ENCODE measurements at regions of chr14 and their contacts with region 1.

Region 1: DNA sequence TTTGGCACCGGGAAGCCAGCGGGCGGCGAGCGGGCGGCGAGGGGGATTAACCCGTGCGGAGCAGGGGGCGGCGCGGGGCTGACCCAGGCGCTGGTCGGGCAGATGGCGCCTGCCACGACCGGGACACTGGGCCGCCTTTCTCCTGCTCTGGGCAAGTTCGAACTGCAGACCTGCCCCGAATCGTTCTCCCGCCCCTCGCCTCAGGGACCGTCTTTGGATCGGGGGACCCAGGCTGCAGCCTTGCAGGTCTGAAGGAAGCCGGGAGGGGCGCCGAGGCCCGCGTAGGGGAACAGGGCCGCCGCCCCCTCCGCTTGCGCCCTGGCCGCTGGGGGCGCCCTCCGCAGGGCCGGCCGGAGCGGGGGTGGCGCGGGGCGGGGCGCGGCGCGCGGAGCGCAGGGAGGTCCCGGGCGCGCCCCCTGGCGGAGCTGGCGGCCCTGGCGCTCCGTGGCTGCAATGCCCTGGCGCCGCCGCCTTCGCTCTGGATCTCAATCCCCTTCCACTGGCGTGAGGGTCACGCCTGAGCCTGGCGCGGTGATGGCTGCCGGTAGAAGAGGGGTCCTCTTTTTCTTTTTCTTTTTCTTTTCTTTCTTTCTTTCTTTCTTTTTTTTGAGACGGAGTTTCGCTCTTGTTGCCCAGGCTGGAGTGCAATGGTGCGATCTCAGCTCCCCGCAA is 449 bp upstream of the LTBP2 start:
- DNase-seq: peak; percentile 70 to 92 (median 83)
- ATAC-seq: peak; percentile 85
- H3K4me3 ChIP-seq: peak overlapping the region; percentile 64 to 79
- H3K4me3 Mint-ChIP-seq: peak overlapping the region; percentile 79
- H3K27ac ChIP-seq: no peak overlapping the region
- H3K27ac Mint-ChIP-seq: no peak overlapping the region
- H3K4me1 ChIP-seq: peaks cover 16% of the 10 kb centered on the region
- H3K4me1 Mint-ChIP-seq: peaks cover 39% of the 10 kb centered on the region
- H3K27me3 ChIP-seq: no peaks in the 10 kb centered on the region
- H3K27me3 Mint-ChIP-seq: no peaks in the 10 kb centered on the region
- CTCF ChIP-seq: peak; percentile 56

Region 2: DNA sequence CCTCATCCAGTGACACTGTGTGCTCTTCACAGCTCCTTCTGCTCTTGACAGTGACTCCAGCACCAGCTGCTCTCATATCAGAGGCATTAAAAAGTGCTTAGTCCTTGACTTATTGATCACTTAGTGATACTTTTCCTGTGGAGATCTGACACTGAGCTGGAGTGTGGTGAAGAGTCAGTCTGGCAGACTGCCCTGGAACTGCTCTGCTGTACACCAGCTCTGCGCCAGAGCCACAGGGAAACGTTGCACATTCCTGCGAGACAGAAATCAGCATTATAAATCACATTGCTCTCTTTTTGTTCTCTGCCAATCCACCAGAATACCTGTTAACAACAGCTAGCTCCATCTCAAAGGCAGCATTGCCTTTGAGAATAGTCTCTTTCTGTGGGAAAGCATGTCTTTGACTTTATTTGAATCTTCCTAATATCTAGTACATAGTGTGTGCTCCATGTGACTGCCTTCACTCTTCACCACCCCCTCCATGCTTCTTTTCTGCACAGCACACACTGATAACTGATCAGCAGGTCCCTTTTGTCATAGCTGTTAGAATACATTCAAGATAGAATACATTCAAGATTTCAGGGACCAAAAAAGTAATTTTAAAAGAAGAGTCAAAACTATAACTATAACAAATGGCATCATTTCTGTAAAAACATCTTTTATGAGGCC is 421.4 kb before region 1 on chr14:
- CTCF ChIA-PET with region 1: no interaction called
- POLR2A ChIA-PET with region 1: no interaction called
- intact Hi-C with region 1: no loop called
- DNase-seq: no peak
- ATAC-seq: no peak
- H3K4me3 ChIP-seq: no peak overlapping the region
- H3K4me3 Mint-ChIP-seq: no peak overlapping the region
- H3K27ac ChIP-seq: no peak overlapping the region
- H3K27ac Mint-ChIP-seq: no peak overlapping the region
- H3K4me1 ChIP-seq: no peaks in the 10 kb centered on the region
- H3K4me1 Mint-ChIP-seq: no peaks in the 10 kb centered on the region
- H3K27me3 ChIP-seq: no peaks in the 10 kb centered on the region
- H3K27me3 Mint-ChIP-seq: no peaks in the 10 kb centered on the region
- CTCF ChIP-seq: no peak

Region 3: DNA sequence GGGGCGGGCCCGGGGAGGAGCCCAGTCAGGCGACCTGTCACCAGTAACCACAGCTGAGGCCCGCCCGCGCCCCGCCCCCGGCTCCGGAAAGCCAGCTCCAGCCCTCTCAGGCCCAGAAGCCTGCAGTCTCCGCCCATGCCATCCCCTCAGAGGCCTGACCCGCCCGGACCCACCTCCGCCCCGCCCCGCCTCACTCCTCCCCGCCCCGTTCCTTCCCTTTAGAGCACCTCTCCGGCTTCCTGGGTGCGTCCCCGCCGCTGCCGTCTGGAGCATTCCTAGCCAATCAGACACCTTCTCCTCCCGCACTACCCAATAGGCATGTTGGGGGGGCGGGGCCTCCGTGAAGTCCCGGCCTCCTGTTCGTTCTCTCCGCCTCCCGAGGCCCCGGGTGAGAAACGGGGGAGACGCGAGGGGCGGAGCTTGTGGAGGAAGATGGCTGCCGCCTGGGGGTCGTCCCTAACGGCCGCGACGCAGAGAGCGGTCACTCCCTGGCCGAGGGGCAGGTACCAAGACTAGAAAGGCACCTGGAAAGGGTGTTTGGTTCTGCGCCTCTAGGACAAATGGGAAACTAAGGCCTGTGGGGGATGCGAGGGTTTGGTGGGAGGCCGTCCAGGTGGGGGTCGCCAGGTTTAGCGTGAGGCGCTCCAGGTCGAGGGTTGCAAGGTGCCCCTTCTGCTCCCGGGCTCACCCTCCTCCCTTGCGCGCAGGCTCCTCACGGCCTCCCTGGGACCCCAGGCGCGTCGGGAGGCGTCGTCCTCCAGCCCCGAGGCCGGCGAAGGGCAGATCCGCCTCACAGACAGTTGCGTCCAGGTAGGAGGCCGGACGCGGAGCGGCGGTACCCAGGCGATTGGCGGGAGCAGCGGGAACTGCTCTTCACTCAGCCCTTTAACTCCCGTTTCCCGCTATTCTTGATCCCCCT is 118.9 kb before region 1 on chr14 and contains the start of gene ISCA2:
- CTCF ChIA-PET with region 1: interaction called, 4 read pairs
- POLR2A ChIA-PET with region 1: no interaction called
- intact Hi-C with region 1: loop called (anchors 5 kb)
- DNase-seq: peak; percentile 97 to 100 (median 99)
- ATAC-seq: peak; percentile 91
- H3K4me3 ChIP-seq: peak within 1 kb of the TSS; percentile 78 to 90
- H3K4me3 Mint-ChIP-seq: no peak within 1 kb of the TSS
- H3K27ac ChIP-seq: peak within 1 kb of the TSS; percentile 80 to 81
- H3K27ac Mint-ChIP-seq: peak within 1 kb of the TSS; percentile 92
- H3K4me1 ChIP-seq: peaks cover 32% of the 10 kb centered on the region
- H3K4me1 Mint-ChIP-seq: peaks cover 33% of the 10 kb centered on the region
- H3K27me3 ChIP-seq: no peaks in the 10 kb centered on the region
- H3K27me3 Mint-ChIP-seq: no peaks in the 10 kb centered on the region
- CTCF ChIP-seq: no peak
- total RNA-seq, gene ISCA2: 18.6 to 24.0 TPM

Region 4: GRCh38 chr14:74671789-74672188 is 59.3 kb after region 1 on chr14:
- CTCF ChIA-PET with region 1: interaction called, 16 read pairs
- POLR2A ChIA-PET with region 1: interaction called, 3 read pairs
- intact Hi-C with region 1: loop called in 1 of 2 experiments (anchors 5 kb)
- DNase-seq: no peak
- ATAC-seq: no peak
- H3K4me3 ChIP-seq: no peak overlapping the region
- H3K4me3 Mint-ChIP-seq: no peak overlapping the region
- H3K27ac ChIP-seq: no peak overlapping the region
- H3K27ac Mint-ChIP-seq: no peak overlapping the region
- H3K4me1 ChIP-seq: no peaks in the 10 kb centered on the region
- H3K4me1 Mint-ChIP-seq: no peaks in the 10 kb centered on the region
- H3K27me3 ChIP-seq: no peaks in the 10 kb centered on the region
- H3K27me3 Mint-ChIP-seq: no peaks in the 10 kb centered on the region
- CTCF ChIP-seq: no peak

Region 5: GRCh38 chr14:74762917-74763802 is 150.7 kb after region 1 on chr14 and contains the start of gene YLPM1:
- CTCF ChIA-PET with region 1: interaction called, 9 read pairs
- POLR2A ChIA-PET with region 1: interaction called, 18 read pairs
- intact Hi-C with region 1: loop called (anchors 1 to 2 kb)
- DNase-seq: peak; percentile 88 to 98 (median 91)
- ATAC-seq: peak; percentile 93
- H3K4me3 ChIP-seq: peak within 1 kb of the TSS; percentile 90 to 95
- H3K4me3 Mint-ChIP-seq: peak within 1 kb of the TSS; percentile 86
- H3K27ac ChIP-seq: peak within 1 kb of the TSS; percentile 68 to 98
- H3K27ac Mint-ChIP-seq: peak within 1 kb of the TSS; percentile 93
- H3K4me1 ChIP-seq: peaks cover 43% of the 10 kb centered on the region
- H3K4me1 Mint-ChIP-seq: peaks cover 51% of the 10 kb centered on the region
- H3K27me3 ChIP-seq: no peaks in the 10 kb centered on the region
- H3K27me3 Mint-ChIP-seq: no peaks in the 10 kb centered on the region
- CTCF ChIP-seq: peak; percentile 41
- total RNA-seq, gene YLPM1: 77.3 to 78.8 TPM

Region 6: GRCh38 chr14:74852927-74853514 is 240.5 kb after region 1 on chr14:
- CTCF ChIA-PET with region 1: interaction called, 10 read pairs
- POLR2A ChIA-PET with region 1: no interaction called
- intact Hi-C with region 1: no loop called
- DNase-seq: no peak
- ATAC-seq: no peak
- H3K4me3 ChIP-seq: no peak overlapping the region
- H3K4me3 Mint-ChIP-seq: no peak overlapping the region
- H3K27ac ChIP-seq: no peak overlapping the region
- H3K27ac Mint-ChIP-seq: peak overlapping the region; percentile 15
- H3K4me1 ChIP-seq: peaks cover 16% of the 10 kb centered on the region
- H3K4me1 Mint-ChIP-seq: peaks cover 24% of the 10 kb centered on the region
- H3K27me3 ChIP-seq: no peaks in the 10 kb centered on the region
- H3K27me3 Mint-ChIP-seq: no peaks in the 10 kb centered on the region
- CTCF ChIP-seq: no peak

Region 7: GRCh38 chr14:75088574-75089373 is 476.3 kb after region 1 on chr14:
- CTCF ChIA-PET with region 1: interaction called, 3 read pairs
- POLR2A ChIA-PET with region 1: no interaction called
- intact Hi-C with region 1: loop called in 1 of 2 experiments (anchors 1 kb)
- DNase-seq: peak in 7 of 9 experiments; percentile 29 to 70 (median 47)
- ATAC-seq: peak; percentile 58
- H3K4me3 ChIP-seq: no peak overlapping the region
- H3K4me3 Mint-ChIP-seq: no peak overlapping the region
- H3K27ac ChIP-seq: no peak overlapping the region
- H3K27ac Mint-ChIP-seq: no peak overlapping the region
- H3K4me1 ChIP-seq: no peaks in the 10 kb centered on the region
- H3K4me1 Mint-ChIP-seq: no peaks in the 10 kb centered on the region
- H3K27me3 ChIP-seq: no peaks in the 10 kb centered on the region
- H3K27me3 Mint-ChIP-seq: no peaks in the 10 kb centered on the region
- CTCF ChIP-seq: peak; percentile 72